Activated CD8-positive, alpha-beta T cell treated with anti-CD3 and anti-CD28 coated beads for 36 hours (primary cell): ENCODE measurements at regions of chr3 and their contacts with region 1.

Region 1: DNA sequence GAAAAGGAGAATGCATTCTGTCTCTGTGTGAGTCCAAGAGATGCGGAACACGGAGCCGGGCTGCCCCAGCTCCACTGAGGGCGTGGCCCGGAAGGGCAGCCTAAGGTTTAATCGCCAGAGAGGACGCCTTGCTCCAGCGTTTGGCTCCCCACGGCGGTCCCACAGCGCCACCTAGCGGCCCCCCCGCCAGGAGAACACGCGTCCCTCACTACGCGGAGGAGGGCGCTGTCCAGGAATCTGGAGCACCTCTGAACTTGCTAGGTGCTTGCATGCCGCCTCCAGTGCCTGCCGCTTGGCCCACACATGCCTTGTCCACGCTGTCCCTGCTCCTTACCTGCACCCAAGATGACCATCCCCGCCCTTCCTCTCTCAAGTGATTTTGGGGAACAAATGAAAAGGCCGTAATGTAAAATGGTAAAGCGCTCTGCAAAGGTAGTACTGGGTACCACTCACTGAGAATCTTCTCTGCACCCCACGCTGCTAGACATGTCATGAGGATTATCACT is 14.4 kb upstream of the MRPS22 start:
- DNase-seq: peak; percentile 92
- ATAC-seq: peak; percentile 97
- H3K4me3 Mint-ChIP-seq: peak overlapping the region; percentile 46
- H3K27ac Mint-ChIP-seq: no peak overlapping the region
- H3K4me1 Mint-ChIP-seq: peaks cover 9% of the 10 kb centered on the region
- H3K27me3 Mint-ChIP-seq: peaks cover 26% of the 10 kb centered on the region
- CTCF ChIP-seq: peak; percentile 94

Region 2: DNA sequence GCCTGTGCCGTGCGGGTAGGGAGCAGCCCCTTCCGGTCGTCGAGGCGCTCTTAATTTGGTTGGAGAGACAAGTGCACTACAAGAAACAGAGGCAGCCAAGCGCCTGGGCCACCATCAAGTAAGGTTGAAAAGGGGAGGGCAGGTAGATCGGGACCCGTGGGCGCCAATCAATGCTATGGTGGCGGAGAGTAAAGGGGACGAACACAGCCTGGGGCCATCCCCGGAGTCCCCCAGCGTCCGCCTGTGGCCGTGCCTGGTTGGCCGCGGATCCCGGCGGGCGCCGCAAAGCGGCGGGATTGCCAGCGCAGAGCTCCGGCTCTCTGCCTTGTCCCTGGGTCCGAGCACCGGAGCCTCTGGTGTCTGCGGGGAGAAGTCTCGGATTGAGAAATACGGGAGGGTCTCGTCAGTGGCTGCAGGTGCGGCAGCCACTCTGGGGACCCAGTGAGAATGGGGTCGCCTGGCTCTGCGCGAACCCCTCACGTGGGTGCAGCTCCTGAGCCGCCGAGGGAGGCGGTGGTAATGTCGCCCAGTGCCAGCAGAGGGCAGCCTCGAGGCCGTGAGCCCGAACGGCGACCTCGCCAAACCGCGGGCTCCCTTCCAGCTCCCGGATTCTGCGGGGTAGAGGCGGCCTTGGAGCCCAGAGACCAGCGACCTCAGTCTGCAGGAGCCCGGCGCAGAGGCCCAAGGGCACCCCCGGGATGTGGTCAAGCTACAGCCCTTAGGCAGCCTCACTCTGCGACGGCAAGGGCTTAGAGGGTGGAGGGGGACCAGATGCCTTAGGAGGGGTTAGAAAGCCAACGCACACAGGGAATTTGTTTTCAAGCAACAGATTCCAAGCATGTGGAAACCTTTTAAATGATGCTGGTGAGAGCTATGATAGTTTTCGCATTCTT is 393.3 kb before region 1 on chr3:
- CTCF ChIA-PET with region 1: interaction called, 11 read pairs
- POLR2A ChIA-PET with region 1: no interaction called
- intact Hi-C with region 1: loop called (anchors 5 kb)
- DNase-seq: peak; percentile 79
- ATAC-seq: peak; percentile 87
- H3K4me3 Mint-ChIP-seq: peak overlapping the region; percentile 67
- H3K27ac Mint-ChIP-seq: no peak overlapping the region
- H3K4me1 Mint-ChIP-seq: peaks cover 31% of the 10 kb centered on the region
- H3K27me3 Mint-ChIP-seq: peaks cover 71% of the 10 kb centered on the region
- CTCF ChIP-seq: peak; percentile 92

Region 3: DNA sequence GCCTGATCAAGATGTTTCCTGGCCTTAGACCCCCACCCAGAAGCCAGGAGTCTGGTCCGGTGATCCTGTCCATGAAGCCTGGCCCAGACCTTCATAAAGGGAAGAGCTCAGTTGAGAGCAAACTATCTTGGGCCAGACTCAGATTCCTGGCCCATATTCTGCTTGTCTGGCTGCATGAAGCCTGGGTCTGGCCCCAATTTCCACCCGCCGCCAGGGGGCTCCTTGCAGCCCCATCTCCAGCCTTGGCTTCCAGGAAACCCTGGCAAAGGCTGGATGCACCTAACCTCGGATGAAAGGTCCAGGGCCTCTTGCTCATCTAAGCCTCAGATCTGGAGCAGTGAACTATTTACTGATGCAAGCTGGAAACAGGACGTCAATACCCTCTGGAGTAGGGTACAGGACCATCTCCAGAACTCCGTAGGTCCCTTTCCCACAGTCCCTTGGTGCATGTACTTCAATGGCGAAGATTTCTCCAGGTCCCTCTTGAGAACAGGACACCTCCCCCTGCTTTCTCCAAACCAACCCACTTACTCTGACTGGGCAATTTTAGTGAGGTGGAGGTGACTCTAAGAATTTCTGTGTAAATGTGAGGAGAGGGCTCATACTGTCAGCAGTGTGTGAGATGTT is 388.0 kb before region 1 on chr3:
- CTCF ChIA-PET with region 1: interaction called, 11 read pairs
- POLR2A ChIA-PET with region 1: no interaction called
- intact Hi-C with region 1: loop called (anchors 5 kb)
- DNase-seq: peak; percentile 58
- ATAC-seq: no peak
- H3K4me3 Mint-ChIP-seq: no peak overlapping the region
- H3K27ac Mint-ChIP-seq: no peak overlapping the region
- H3K4me1 Mint-ChIP-seq: peaks cover 44% of the 10 kb centered on the region
- H3K27me3 Mint-ChIP-seq: peaks cover 80% of the 10 kb centered on the region
- CTCF ChIP-seq: peak; percentile 35

Region 4: DNA sequence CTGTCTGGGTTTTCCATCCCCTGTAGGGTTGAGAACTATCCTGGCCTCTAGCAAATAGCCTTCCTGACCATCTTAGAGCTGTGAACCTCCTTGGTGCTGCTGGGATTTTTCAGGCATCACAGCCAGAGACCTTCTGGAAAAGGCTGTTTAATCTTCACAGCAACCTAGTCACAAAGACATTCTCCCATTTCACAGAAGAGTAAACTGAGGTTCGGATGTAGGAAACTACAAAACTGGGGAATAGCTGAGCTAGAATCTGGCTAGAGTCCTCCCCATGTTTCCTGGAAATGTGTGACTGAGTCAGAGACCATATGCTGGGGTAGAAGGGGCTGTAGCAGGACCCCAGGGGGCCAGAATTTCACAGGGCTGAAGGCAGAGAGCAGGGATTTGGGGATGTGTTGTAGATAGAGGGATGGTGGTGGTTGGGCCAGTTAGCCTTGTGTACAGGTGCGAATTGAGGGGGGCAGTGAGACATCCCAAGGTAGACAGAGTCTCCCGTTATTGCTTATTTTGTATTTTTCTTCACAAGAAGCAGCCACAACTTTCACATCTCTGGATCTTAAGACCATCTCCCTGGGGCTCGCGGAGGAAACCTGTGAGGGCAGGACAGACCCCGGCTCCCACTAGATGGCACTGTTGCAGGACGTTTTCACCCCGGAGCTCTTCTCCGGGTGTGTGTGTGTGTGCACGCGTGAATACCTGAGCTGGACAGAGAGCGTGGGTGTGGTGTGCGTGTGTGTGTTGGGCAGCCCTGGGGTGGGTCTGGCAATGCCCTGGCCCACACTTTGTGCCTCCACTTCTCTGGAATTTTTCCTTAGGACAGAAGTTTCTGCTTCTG is 217.8 kb before region 1 on chr3:
- CTCF ChIA-PET with region 1: interaction called, 53 read pairs
- POLR2A ChIA-PET with region 1: no interaction called
- intact Hi-C with region 1: loop called (anchors 2 kb)
- DNase-seq: peak; percentile 76
- ATAC-seq: peak; percentile 46
- H3K4me3 Mint-ChIP-seq: no peak overlapping the region
- H3K27ac Mint-ChIP-seq: no peak overlapping the region
- H3K4me1 Mint-ChIP-seq: peaks cover 2% of the 10 kb centered on the region
- H3K27me3 Mint-ChIP-seq: peaks cover 14% of the 10 kb centered on the region
- CTCF ChIP-seq: peak; percentile 70

Region 5: DNA sequence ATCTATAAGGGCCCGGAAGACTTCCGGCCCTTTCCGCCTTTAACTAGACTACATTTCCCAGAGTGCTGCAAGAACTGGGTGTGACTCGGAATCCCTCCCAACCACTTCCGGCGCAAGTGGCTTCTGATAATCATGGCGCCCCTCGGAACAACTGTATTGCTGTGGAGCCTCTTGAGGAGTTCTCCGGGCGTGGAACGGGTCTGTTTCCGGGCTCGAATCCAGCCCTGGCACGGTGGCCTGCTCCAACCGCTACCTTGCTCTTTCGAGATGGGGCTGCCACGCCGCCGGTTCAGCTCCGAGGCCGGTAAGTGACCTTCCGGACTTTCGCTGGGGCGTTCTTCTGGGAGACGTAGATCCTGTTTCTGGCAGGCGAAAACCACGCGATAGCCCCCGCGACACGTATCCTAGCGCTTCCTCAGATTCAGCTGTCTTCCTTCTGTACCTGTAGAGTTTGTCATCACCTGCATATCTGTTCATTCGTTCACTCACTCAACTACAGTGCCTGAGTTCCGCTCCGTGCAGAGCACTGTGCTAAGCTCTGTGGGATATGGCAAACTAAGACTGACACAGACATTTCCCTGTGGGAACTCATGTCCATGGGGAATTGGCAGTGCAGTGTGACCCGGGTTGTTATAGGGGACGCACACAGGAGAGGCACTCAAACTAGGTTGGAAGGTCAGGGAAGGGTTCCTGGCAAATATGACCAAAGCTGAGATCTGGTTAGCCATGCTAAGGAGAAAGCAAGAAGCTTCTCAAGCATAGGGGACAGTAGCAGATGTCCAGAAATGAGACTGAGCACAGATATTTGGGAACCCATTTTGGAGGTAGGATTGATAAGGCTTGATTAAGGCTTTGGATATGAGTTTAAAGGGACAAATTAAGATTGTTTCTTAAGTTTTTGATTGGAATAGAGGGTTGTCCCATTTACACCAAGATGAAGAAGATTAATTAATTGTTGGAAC is 14.8 kb after region 1 on chr3 and contains the start of gene MRPS22:
- CTCF ChIA-PET with region 1: interaction called, 21 read pairs
- POLR2A ChIA-PET with region 1: no interaction called
- intact Hi-C with region 1: no loop called
- DNase-seq: peak; percentile 92
- ATAC-seq: peak; percentile 94
- H3K4me3 Mint-ChIP-seq: no peak within 1 kb of the TSS
- H3K27ac Mint-ChIP-seq: peak within 1 kb of the TSS; percentile 78
- H3K4me1 Mint-ChIP-seq: peaks cover 14% of the 10 kb centered on the region
- H3K27me3 Mint-ChIP-seq: peaks cover 5% of the 10 kb centered on the region
- CTCF ChIP-seq: no peak
- total RNA-seq, gene MRPS22: 67.4 to 68.9 TPM